ENCODE measurements at regions of chr1 and their contacts with region 1.

Region 1: GRCh38 chr1:50929376-50929958 is 30.6 kb downstream of the FAF1 start:
- DNase-seq: no peak
- H3K4me3 Mint-ChIP-seq: no peak overlapping the region
- H3K27ac Mint-ChIP-seq: no peak overlapping the region
- H3K4me1 Mint-ChIP-seq: peaks cover 26% of the 10 kb centered on the region
- H3K27me3 Mint-ChIP-seq: no peaks in the 10 kb centered on the region

Region 2: GRCh38 chr1:50582346-50582745 is 347.1 kb before region 1 on chr1:
- CTCF ChIA-PET with region 1: no interaction called
- POLR2A ChIA-PET with region 1: no interaction called
- intact Hi-C with region 1: no loop called
- DNase-seq: no peak
- H3K4me3 Mint-ChIP-seq: no peak overlapping the region
- H3K27ac Mint-ChIP-seq: no peak overlapping the region
- H3K4me1 Mint-ChIP-seq: no peaks in the 10 kb centered on the region
- H3K27me3 Mint-ChIP-seq: no peaks in the 10 kb centered on the region

Region 3: DNA sequence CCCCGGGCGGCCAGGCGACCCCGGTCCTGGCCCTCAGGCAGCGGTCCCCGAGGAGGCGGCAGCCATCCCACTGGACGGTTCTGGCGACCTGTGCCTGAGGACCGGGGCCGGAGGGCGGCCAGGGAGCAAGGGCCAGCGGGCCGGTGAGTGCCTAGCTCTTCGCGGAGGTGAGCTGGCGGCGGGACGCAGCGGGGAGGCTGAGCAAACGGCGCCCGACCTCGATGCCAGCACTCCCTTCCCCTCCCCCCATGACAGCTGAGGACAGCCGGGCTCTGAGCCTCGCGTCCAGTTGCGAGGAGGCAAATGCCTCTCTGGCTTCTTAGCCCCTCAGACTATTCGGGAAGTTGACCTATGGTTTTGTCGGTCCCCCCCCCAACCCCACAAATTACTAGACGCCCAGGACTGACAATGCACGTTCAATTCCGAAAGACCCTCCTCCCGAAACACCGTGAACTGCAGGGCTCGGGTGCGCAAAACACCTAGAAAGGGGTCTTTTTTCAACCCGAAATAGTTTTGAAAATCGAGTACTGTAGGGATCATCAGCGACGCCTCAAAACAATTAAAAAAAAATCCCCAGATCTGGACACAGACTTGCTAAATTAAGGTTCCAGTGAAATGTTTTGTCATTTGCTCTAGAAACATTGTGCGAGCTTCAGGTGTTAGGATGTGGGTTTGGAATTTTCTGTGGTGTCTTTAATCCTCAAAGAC is 48.8 kb after region 1 on chr1:
- CTCF ChIA-PET with region 1: interaction called, 13 read pairs
- POLR2A ChIA-PET with region 1: no interaction called
- intact Hi-C with region 1: no loop called
- DNase-seq: peak; percentile 34
- H3K4me3 Mint-ChIP-seq: peak overlapping the region; percentile 75
- H3K27ac Mint-ChIP-seq: no peak overlapping the region
- H3K4me1 Mint-ChIP-seq: peaks cover 22% of the 10 kb centered on the region
- H3K27me3 Mint-ChIP-seq: peaks cover 41% of the 10 kb centered on the region